ENCODE measurements at regions of chr1 and their contacts with region 1.

Region 1: DNA sequence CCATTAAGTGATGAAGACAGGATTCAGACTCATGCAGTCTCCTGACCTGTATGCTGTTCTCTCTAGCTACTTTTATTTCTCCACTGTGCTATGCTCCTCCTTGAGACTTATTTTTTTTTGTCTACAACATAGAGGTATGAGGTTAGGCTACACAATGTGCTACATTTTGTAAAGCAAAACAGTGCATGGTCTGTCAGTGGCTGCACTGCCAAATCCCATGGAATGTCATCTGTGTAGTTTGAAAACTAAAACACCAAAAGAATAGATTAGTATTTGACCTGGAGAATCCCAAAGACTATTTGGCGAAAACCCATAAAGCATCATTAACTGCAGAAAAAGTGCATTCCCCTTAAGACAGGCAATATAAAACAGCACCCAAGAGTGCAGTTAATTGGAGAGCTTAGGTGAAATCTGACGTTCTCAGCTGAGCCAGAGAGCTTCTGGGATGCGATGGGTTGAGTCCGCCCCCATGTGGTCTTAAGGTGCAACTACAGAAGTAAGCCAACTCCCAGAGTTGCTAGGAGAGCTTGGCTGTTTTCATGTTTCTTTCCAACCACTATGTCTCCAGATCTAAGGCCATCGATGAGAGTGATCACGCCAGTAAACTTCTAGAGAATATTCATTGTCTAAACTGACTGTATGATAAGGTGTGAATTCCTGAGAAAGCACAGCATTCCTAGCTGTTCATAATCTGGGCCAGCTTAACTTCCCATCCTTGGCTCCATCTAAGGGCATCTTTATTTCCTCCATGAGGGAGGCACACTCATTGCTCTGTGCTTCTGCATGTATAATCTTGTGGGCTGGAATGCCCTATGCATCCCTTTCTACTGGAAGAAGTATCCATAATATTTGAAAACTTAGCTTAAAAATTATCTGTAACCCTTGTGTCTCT is 20.7 kb upstream of the CYP2J2 start:
- DNase-seq: peak; percentile 65
- H3K27ac ChIP-seq: no peak overlapping the region
- CTCF ChIP-seq: peak; percentile 88

Region 2: GRCh38 chr1:59833022-59833421 is 114.3 kb before region 1 on chr1:
- CTCF ChIA-PET with region 1: no interaction called
- POLR2A ChIA-PET with region 1: no interaction called
- DNase-seq: no peak
- H3K27ac ChIP-seq: no peak overlapping the region
- CTCF ChIP-seq: no peak

Region 3: GRCh38 chr1:59879574-59879973 is 67.7 kb before region 1 on chr1:
- CTCF ChIA-PET with region 1: interaction called, 64 read pairs
- POLR2A ChIA-PET with region 1: no interaction called
- DNase-seq: peak; percentile 59
- H3K27ac ChIP-seq: no peak overlapping the region
- CTCF ChIP-seq: peak; percentile 33

Region 4: DNA sequence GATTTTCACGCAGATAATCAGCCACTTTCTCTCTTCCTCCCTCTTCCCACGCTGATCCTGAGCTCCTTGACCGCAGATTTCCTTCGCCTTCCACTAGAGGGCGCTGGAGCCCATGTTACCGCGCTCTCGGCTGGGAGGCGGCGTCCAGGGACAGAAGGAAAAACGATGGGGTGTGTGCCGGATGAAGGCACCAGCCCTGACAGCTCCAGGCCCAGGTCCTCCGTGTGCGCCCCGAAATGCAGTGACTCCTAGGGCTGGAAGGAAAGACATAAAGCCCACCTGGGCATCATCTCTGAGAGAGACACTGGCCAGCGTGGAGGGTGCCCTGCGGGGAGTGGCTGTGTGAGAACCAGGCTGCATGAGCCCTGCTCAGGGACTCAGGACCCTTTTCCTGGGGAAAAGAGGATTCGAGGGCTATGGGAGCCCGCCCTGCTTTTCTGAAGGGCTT is 24.2 kb after region 1 on chr1:
- CTCF ChIA-PET with region 1: interaction called, 14 read pairs
- POLR2A ChIA-PET with region 1: no interaction called
- DNase-seq: peak; percentile 76
- H3K27ac ChIP-seq: no peak overlapping the region
- CTCF ChIP-seq: peak; percentile 89

Region 5: DNA sequence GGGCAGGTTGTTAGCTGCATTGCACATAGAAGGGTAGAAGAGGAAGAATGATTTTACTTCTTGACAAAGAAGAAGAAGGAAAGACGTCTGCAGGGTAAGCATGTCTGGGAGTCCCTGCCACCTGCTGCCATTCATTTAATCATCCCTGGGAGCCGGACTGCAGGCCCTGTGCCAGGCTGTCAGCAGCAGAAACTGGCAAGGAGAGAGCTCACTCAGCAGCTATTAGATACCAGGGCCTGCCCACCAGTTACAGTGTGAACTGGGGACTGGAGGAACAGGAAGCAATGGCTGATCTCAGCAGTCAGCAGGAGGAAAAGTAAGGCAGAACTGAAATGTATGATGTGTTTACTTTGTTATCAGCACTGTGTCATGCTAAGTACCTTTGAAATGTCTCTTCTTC is 202.0 kb after region 1 on chr1:
- CTCF ChIA-PET with region 1: no interaction called
- POLR2A ChIA-PET with region 1: no interaction called
- DNase-seq: no peak
- H3K27ac ChIP-seq: no peak overlapping the region
- CTCF ChIP-seq: no peak